WTC11 (cell line): ENCODE measurements at regions of chr1 and their contacts with region 1.

Region 1: GRCh38 chr1:39378377-39378776 is 113.1 kb upstream of the BMP8A start:
- DNase-seq: peak; percentile 26
- ATAC-seq: peak; percentile 97
- H3K4me3 Mint-ChIP-seq: no peak overlapping the region
- H3K27ac Mint-ChIP-seq: no peak overlapping the region
- H3K4me1 Mint-ChIP-seq: no peaks in the 10 kb centered on the region
- H3K27me3 Mint-ChIP-seq: no peaks in the 10 kb centered on the region
- CTCF ChIP-seq: no peak

Region 2: GRCh38 chr1:39391691-39392679 is 13.6 kb after region 1 on chr1:
- CTCF ChIA-PET with region 1: interaction called, 11 read pairs
- POLR2A ChIA-PET with region 1: no interaction called
- DNase-seq: no peak
- ATAC-seq: peak; percentile 60
- H3K4me3 Mint-ChIP-seq: peak overlapping the region; percentile 23
- H3K27ac Mint-ChIP-seq: peak overlapping the region; percentile 92
- H3K4me1 Mint-ChIP-seq: peaks cover 52% of the 10 kb centered on the region
- H3K27me3 Mint-ChIP-seq: no peaks in the 10 kb centered on the region
- CTCF ChIP-seq: no peak

Region 3: GRCh38 chr1:39446986-39447567 is 68.7 kb after region 1 on chr1:
- CTCF ChIA-PET with region 1: no interaction called
- POLR2A ChIA-PET with region 1: no interaction called
- DNase-seq: no peak
- ATAC-seq: no peak
- H3K4me3 Mint-ChIP-seq: no peak overlapping the region
- H3K27ac Mint-ChIP-seq: no peak overlapping the region; the same call in 1 of the 2 replicates
- H3K4me1 Mint-ChIP-seq: no peaks in the 10 kb centered on the region
- H3K27me3 Mint-ChIP-seq: no peaks in the 10 kb centered on the region
- CTCF ChIP-seq: no peak